Transverse colon (tissue), 4 donors: ENCODE measurements at regions of chr5 and their contacts with region 1.

Region 1: GRCh38 chr5:168268949-168269943 is 22.2 kb upstream of the WWC1 start:
- DNase-seq: peak; percentile 88
- H3K4me3 ChIP-seq: peak overlapping the region in 3 of 4 donors; percentile 0 to 39 (median 23)
- H3K27ac ChIP-seq: peak overlapping the region in 3 of 4 donors; percentile 21 to 64 (median 37)
- H3K4me1 ChIP-seq: peaks cover 10 to 23% (median 13%) of the 10 kb centered on the region in 4 donors
- H3K27me3 ChIP-seq: no peaks in the 10 kb centered on the region
- CTCF ChIP-seq: peak; percentile 79 to 94 (median 87)
- EP300 ChIP-seq: no peak
- POLR2A ChIP-seq: no peak

Region 2: DNA sequence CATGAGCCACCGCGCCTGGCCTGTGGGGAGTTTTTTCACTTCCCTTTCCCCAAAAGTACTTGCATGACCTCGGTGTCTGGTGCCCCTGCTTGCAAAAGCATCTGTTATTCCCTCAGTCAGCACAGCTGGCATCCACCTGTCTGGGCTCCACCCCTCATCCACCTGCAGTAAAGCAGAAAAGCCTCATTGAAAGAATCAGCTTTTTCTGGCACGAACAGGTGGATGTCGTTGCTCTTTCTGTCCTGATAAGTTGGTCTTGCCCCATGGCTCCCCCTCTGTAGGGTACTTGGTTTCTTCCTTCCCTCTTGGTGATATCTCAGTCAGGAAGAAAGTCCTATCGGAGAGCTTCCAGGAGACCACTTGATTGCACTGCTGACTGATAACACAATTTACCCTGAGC is 59.6 kb after region 1 on chr5:
- in situ Hi-C with region 1: no loop called
- intact Hi-C with region 1: no loop called
- DNase-seq: peak; percentile 66
- H3K4me3 ChIP-seq: no peak overlapping the region
- H3K27ac ChIP-seq: peak overlapping the region; percentile 58 to 69 (median 60)
- H3K4me1 ChIP-seq: peaks cover 4 to 22% (median 16%) of the 10 kb centered on the region in 4 donors
- H3K27me3 ChIP-seq: no peaks in the 10 kb centered on the region
- CTCF ChIP-seq: no peak
- EP300 ChIP-seq: no peak
- POLR2A ChIP-seq: no peak

Region 3: DNA sequence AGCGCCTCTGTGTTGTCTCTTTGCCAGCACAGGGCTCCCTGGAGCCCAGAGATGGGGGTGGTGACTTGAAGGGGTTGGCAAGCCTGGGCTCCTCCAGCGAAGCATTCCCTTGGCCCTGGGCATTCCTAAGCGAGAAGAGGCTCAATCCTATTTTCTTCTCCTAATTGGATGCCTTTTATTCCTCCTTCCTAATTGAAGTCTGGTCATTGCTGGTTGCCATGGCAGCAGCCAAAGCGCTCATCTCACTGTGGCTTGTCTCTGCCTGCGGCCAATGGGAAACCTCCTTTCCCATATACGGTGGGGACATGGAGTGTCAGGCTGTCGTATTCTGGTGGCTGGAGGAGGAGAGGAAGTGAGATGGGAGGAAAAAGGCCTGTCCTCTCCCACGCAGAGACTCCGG is 164.8 kb after region 1 on chr5:
- in situ Hi-C with region 1: loop called in 1 of 4 experiments (anchors 25 kb)
- intact Hi-C with region 1: no loop called
- DNase-seq: no peak
- H3K4me3 ChIP-seq: no peak overlapping the region
- H3K27ac ChIP-seq: no peak overlapping the region
- H3K4me1 ChIP-seq: peaks cover 0 to 2% (median 0%) of the 10 kb centered on the region in 4 donors
- H3K27me3 ChIP-seq: no peaks in the 10 kb centered on the region
- CTCF ChIP-seq: no peak
- EP300 ChIP-seq: no peak
- POLR2A ChIP-seq: no peak

Region 4: GRCh38 chr5:168916266-168916665 is 647.0 kb after region 1 on chr5:
- in situ Hi-C with region 1: no loop called
- intact Hi-C with region 1: no loop called
- DNase-seq: peak; percentile 13
- H3K4me3 ChIP-seq: no peak overlapping the region
- H3K27ac ChIP-seq: no peak overlapping the region
- H3K4me1 ChIP-seq: no peaks in the 10 kb centered on the region
- H3K27me3 ChIP-seq: peaks cover 9% of the 10 kb centered on the region
- CTCF ChIP-seq: no peak
- EP300 ChIP-seq: no peak
- POLR2A ChIP-seq: no peak